CD4-positive, alpha-beta T cell (primary cell): ENCODE measurements at regions of chr10 and their contacts with region 1.

Region 1: DNA sequence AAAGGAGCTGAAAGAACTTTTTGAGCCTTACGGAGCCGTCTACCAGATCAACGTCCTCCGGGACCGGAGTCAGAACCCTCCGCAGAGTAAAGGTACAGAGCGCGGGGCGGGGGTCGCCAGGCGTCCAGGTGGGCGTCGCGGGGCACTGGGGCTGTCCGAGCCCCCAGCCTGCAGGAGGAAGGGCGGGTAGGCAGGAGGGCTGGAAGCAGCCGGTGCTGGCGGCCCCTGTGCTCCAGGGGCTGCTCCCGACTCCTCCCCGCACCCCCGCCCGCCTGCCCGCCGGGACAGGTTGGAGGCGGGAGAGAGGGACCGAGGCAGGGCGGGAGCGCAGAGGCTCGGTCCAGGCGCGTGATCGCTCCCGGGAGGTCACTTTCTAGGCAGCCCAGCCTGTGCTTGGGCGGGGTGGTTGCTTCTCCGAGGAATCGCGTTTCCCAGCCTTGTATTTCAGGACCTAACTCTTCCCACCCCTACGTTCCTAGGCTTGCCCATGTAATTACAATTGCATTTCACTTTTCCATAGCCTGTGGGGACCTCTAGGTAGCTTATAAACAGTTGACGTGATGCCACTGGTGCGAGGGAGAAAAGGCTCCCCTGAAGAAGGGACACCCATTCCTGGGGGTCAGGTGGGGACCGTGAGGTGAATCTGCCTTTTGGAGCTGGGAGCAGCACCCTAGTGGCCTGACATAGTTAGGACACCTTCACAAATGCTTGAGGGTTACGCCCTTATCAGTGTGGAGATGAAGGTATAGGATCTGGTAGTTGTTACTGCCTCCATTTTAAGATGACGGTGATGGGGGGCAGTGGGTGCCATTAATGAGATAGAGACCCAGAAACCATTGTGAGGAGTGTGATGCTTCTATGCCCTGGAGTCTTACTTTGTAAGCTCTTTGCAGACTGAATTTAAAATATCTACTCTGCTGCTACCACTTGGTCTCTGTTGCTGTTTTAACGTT is 148.2 kb downstream of the CELF2 start:
- DNase-seq: peak in 13 of 14 experiments; percentile 50 to 92 (median 66)
- ATAC-seq: peak; percentile 62
- H3K4me3 ChIP-seq: peak overlapping the region; percentile 87
- H3K4me3 Mint-ChIP-seq: peak overlapping the region; percentile 99
- H3K27ac ChIP-seq: peak overlapping the region; percentile 84 to 96
- H3K27ac Mint-ChIP-seq: no peak overlapping the region
- H3K4me1 ChIP-seq: peaks cover 53% of the 10 kb centered on the region
- H3K4me1 Mint-ChIP-seq: peaks cover 45% of the 10 kb centered on the region
- H3K27me3 ChIP-seq: no peaks in the 10 kb centered on the region
- H3K27me3 Mint-ChIP-seq: no peaks in the 10 kb centered on the region
- CTCF ChIP-seq: peak; percentile 81

Region 2: GRCh38 chr10:11017570-11018431 is 148.1 kb before region 1 on chr10 and contains the start of gene CELF2:
- CTCF ChIA-PET with region 1: no interaction called
- POLR2A ChIA-PET with region 1: interaction called, 21 read pairs
- intact Hi-C with region 1: loop called in 1 of 2 experiments (anchors 10 kb)
- DNase-seq: peak in 13 of 14 experiments; percentile 8 to 77 (median 36)
- ATAC-seq: peak; percentile 78
- H3K4me3 ChIP-seq: peak within 1 kb of the TSS; percentile 32
- H3K4me3 Mint-ChIP-seq: peak within 1 kb of the TSS; percentile 84
- H3K27ac ChIP-seq: no peak within 1 kb of the TSS
- H3K27ac Mint-ChIP-seq: no peak within 1 kb of the TSS
- H3K4me1 ChIP-seq: peaks cover 9% of the 10 kb centered on the region
- H3K4me1 Mint-ChIP-seq: peaks cover 28% of the 10 kb centered on the region
- H3K27me3 ChIP-seq: peaks cover 30 to 77% of the 10 kb centered on the region in 2 experiments
- H3K27me3 Mint-ChIP-seq: peaks cover 77% of the 10 kb centered on the region
- CTCF ChIP-seq: no peak
- total RNA-seq, gene CELF2: 197 to 205 TPM

Region 3: GRCh38 chr10:11113156-11113555 is 52.7 kb before region 1 on chr10:
- CTCF ChIA-PET with region 1: interaction called, 12 read pairs
- POLR2A ChIA-PET with region 1: interaction called, 96 read pairs
- intact Hi-C with region 1: loop called (anchors 1 to 2 kb)
- DNase-seq: peak in 9 of 14 experiments; percentile 13 to 79 (median 26)
- ATAC-seq: peak; percentile 96
- H3K4me3 ChIP-seq: no peak overlapping the region
- H3K4me3 Mint-ChIP-seq: peak overlapping the region; percentile 52
- H3K27ac ChIP-seq: no peak overlapping the region
- H3K27ac Mint-ChIP-seq: peak overlapping the region; percentile 68
- H3K4me1 ChIP-seq: peaks cover 7% of the 10 kb centered on the region
- H3K4me1 Mint-ChIP-seq: peaks cover 49% of the 10 kb centered on the region
- H3K27me3 ChIP-seq: no peaks in the 10 kb centered on the region
- H3K27me3 Mint-ChIP-seq: no peaks in the 10 kb centered on the region
- CTCF ChIP-seq: peak; percentile 77

Region 4: GRCh38 chr10:11145495-11145855 is 20.4 kb before region 1 on chr10:
- CTCF ChIA-PET with region 1: interaction called, 107 read pairs
- POLR2A ChIA-PET with region 1: interaction called, 1,077 read pairs
- intact Hi-C with region 1: loop called (anchors 1 to 2 kb)
- DNase-seq: peak; percentile 47 to 89 (median 64)
- ATAC-seq: peak; percentile 63
- H3K4me3 ChIP-seq: peak overlapping the region; percentile 15
- H3K4me3 Mint-ChIP-seq: peak overlapping the region; percentile 73
- H3K27ac ChIP-seq: peak overlapping the region; percentile 89 to 91
- H3K27ac Mint-ChIP-seq: peak overlapping the region; percentile 97
- H3K4me1 ChIP-seq: peaks cover 94% of the 10 kb centered on the region
- H3K4me1 Mint-ChIP-seq: peaks cover 97% of the 10 kb centered on the region
- H3K27me3 ChIP-seq: no peaks in the 10 kb centered on the region
- H3K27me3 Mint-ChIP-seq: no peaks in the 10 kb centered on the region
- CTCF ChIP-seq: no peak

Region 5: DNA sequence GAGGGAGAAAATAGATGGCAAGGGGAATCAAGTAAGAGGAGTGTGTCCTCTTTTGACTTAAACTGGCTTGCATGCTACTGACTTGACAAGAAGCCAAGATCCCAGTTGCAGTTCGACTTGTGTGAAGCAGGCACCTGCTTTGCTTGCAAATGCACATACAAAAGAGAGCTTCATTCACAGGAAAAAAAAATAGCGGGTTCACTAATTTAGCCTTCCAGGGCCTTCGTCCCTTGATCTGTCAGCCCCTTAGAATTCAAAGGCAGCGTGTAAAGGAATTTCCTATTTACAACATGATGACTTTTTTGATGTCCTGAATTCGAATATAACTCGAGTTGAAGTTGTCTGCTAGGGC is 43.9 kb after region 1 on chr10:
- CTCF ChIA-PET with region 1: no interaction called
- POLR2A ChIA-PET with region 1: interaction called, 8 read pairs
- intact Hi-C with region 1: loop called in 1 of 2 experiments (anchors 5 kb)
- DNase-seq: peak in 2 of 14 experiments; percentile 51 to 58
- ATAC-seq: peak; percentile 11
- H3K4me3 ChIP-seq: peak overlapping the region; percentile 22
- H3K4me3 Mint-ChIP-seq: peak overlapping the region; percentile 82
- H3K27ac ChIP-seq: peak overlapping the region; percentile 43 to 60
- H3K27ac Mint-ChIP-seq: peak overlapping the region; percentile 81
- H3K4me1 ChIP-seq: peaks cover 84% of the 10 kb centered on the region
- H3K4me1 Mint-ChIP-seq: peaks cover 98% of the 10 kb centered on the region
- H3K27me3 ChIP-seq: no peaks in the 10 kb centered on the region
- H3K27me3 Mint-ChIP-seq: no peaks in the 10 kb centered on the region
- CTCF ChIP-seq: no peak

Region 6: GRCh38 chr10:11355592-11355991 is 189.7 kb after region 1 on chr10:
- CTCF ChIA-PET with region 1: no interaction called
- POLR2A ChIA-PET with region 1: no interaction called
- intact Hi-C with region 1: no loop called
- DNase-seq: no peak
- ATAC-seq: no peak
- H3K4me3 ChIP-seq: no peak overlapping the region
- H3K4me3 Mint-ChIP-seq: no peak overlapping the region
- H3K27ac ChIP-seq: no peak overlapping the region
- H3K27ac Mint-ChIP-seq: no peak overlapping the region
- H3K4me1 ChIP-seq: no peaks in the 10 kb centered on the region
- H3K4me1 Mint-ChIP-seq: no peaks in the 10 kb centered on the region
- H3K27me3 ChIP-seq: no peaks in the 10 kb centered on the region
- H3K27me3 Mint-ChIP-seq: no peaks in the 10 kb centered on the region
- CTCF ChIP-seq: no peak

Region 7: GRCh38 chr10:11684717-11685645 is 519.1 kb after region 1 on chr10:
- CTCF ChIA-PET with region 1: no interaction called
- POLR2A ChIA-PET with region 1: interaction called, 11 read pairs
- intact Hi-C with region 1: no loop called
- DNase-seq: peak; percentile 38 to 84 (median 62)
- ATAC-seq: peak; percentile 86
- H3K4me3 ChIP-seq: peak overlapping the region; percentile 51
- H3K4me3 Mint-ChIP-seq: peak overlapping the region; percentile 87
- H3K27ac ChIP-seq: peak overlapping the region; percentile 86 to 88
- H3K27ac Mint-ChIP-seq: peak overlapping the region; percentile 98
- H3K4me1 ChIP-seq: peaks cover 51% of the 10 kb centered on the region
- H3K4me1 Mint-ChIP-seq: peaks cover 73% of the 10 kb centered on the region
- H3K27me3 ChIP-seq: no peaks in the 10 kb centered on the region
- H3K27me3 Mint-ChIP-seq: no peaks in the 10 kb centered on the region
- CTCF ChIP-seq: no peak